Transverse colon (tissue), 4 donors: ENCODE measurements at regions of chr15 and their contacts with region 1.

Region 1: DNA sequence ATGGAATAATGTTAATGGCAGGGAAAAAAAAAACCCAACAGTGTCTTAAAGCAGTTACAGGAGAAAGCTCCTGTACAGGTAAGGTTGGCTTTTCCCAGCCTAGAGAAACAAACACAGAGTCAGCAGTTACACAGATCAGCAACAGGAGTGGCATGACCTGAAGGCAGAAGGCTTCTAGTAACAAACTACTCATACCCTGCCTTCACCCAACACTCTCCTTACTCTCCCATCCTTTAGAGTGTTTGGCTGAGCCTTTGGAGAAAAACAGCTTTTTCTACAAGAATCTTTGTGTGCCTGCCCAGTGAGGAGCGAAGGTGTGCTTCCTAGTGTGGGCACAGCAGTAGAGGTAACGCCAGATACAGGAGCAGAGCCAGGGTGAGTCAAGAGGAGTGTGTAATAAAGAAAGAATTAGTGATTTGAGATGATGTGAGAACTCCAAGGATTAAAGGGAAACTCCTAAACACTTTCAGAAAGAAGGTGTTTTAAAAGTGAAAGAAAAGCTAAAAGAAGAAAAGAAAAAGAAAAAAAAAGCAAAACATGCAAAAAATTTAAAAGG is 152.7 kb downstream of the POLR2M start:
- DNase-seq: no peak
- H3K4me3 ChIP-seq: no peak overlapping the region
- H3K27ac ChIP-seq: no peak overlapping the region
- H3K4me1 ChIP-seq: peaks cover 0 to 12% (median 6%) of the 10 kb centered on the region in 4 donors
- H3K27me3 ChIP-seq: peaks cover 4% of the 10 kb centered on the region
- CTCF ChIP-seq: no peak
- EP300 ChIP-seq: no peak
- POLR2A ChIP-seq: no peak

Region 2: GRCh38 chr15:57451555-57451954 is 407.7 kb before region 1 on chr15:
- in situ Hi-C with region 1: no loop called
- intact Hi-C with region 1: no loop called
- DNase-seq: no peak
- H3K4me3 ChIP-seq: no peak overlapping the region
- H3K27ac ChIP-seq: no peak overlapping the region
- H3K4me1 ChIP-seq: no peaks in the 10 kb centered on the region
- H3K27me3 ChIP-seq: no peaks in the 10 kb centered on the region
- CTCF ChIP-seq: no peak
- EP300 ChIP-seq: no peak
- POLR2A ChIP-seq: no peak

Region 3: GRCh38 chr15:57743424-57743823 is 115.8 kb before region 1 on chr15:
- in situ Hi-C with region 1: loop called in 2 of 4 experiments (anchors 5 to 10 kb)
- intact Hi-C with region 1: no loop called
- DNase-seq: no peak
- H3K4me3 ChIP-seq: no peak overlapping the region
- H3K27ac ChIP-seq: no peak overlapping the region
- H3K4me1 ChIP-seq: no peaks in the 10 kb centered on the region
- H3K27me3 ChIP-seq: no peaks in the 10 kb centered on the region
- CTCF ChIP-seq: no peak
- EP300 ChIP-seq: no peak
- POLR2A ChIP-seq: no peak

Region 4: DNA sequence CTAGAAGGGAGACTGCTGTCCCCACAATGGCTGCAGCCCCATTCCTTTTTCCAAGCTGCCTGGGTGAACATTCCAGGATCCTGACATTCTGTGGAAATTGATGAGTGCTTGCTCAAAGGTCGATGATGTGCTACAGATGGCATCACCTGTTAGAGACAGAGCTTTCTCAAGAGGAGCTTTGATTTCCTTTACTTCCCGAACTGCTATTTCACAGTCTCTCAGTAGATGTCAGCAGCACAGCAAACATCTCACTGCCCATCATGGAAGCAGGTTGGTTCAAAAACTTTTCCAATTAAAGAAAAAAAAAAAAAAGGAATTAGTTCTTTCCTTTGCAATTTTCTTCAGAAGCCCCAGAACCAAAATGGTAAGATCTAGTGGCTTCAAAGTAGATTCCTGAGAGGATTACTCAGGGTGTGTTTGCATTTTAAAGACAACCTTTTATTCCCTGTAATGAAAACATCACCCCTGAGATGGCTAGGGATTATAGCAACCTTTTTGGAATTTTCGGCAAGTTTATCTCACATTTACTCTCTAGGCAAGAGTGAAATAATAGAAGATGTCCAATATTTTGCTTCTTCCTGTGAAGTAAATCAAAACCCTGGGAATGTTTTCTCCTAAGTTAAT is 107.9 kb before region 1 on chr15:
- in situ Hi-C with region 1: loop called in 2 of 4 experiments (anchors 5 to 10 kb)
- intact Hi-C with region 1: loop called (anchors 10 kb)
- DNase-seq: no peak
- H3K4me3 ChIP-seq: no peak overlapping the region
- H3K27ac ChIP-seq: no peak overlapping the region
- H3K4me1 ChIP-seq: peaks cover 0 to 5% (median 0%) of the 10 kb centered on the region in 4 donors
- H3K27me3 ChIP-seq: no peaks in the 10 kb centered on the region
- CTCF ChIP-seq: peak; percentile 33 to 53 (median 45)
- EP300 ChIP-seq: no peak
- POLR2A ChIP-seq: no peak

Region 5: GRCh38 chr15:57892181-57892580 is 33.0 kb after region 1 on chr15:
- in situ Hi-C with region 1: no loop called
- intact Hi-C with region 1: no loop called
- DNase-seq: no peak
- H3K4me3 ChIP-seq: no peak overlapping the region
- H3K27ac ChIP-seq: no peak overlapping the region
- H3K4me1 ChIP-seq: no peaks in the 10 kb centered on the region
- H3K27me3 ChIP-seq: no peaks in the 10 kb centered on the region
- CTCF ChIP-seq: no peak
- EP300 ChIP-seq: no peak
- POLR2A ChIP-seq: no peak

Region 6: DNA sequence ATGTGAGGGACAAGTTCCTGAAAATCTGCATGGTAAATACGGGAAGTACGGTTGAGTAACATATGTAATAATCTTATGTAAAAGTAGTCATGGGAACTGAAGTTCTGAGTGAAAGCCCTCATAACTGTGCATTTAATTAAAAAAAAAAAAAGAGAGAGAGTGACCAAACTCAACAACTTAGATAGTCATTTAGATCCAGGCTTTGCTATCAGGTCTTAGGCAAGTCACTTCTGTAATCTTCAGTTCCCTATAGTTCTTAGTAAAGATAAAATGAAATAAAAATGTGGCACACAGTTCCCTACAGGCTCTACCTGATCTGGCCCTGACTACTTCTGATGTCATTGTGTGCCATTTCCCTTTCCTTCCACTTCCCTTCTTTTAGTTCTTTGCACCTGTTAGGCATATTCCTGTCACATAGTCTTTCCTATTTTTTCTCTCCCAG is 1143.2 kb after region 1 on chr15:
- in situ Hi-C with region 1: no loop called
- intact Hi-C with region 1: loop called (anchors 5 kb)
- DNase-seq: no peak
- H3K4me3 ChIP-seq: no peak overlapping the region
- H3K27ac ChIP-seq: no peak overlapping the region
- H3K4me1 ChIP-seq: peaks cover 0 to 22% (median 0%) of the 10 kb centered on the region in 4 donors
- H3K27me3 ChIP-seq: no peaks in the 10 kb centered on the region
- CTCF ChIP-seq: no peak
- EP300 ChIP-seq: no peak
- POLR2A ChIP-seq: no peak